Adrenal gland (tissue), 19 donors: ENCODE measurements at regions of chr4 and their contacts with region 1.

Region 1: GRCh38 chr4:53929955-53930798 is 134.2 kb downstream of the CHIC2 start:
- DNase-seq: peak; percentile 75 to 95 (median 86)
- H3K4me3 ChIP-seq: no peak overlapping the region
- H3K27ac ChIP-seq: no peak overlapping the region
- H3K4me1 ChIP-seq: no peaks in the 10 kb centered on the region
- H3K27me3 ChIP-seq: no peaks in the 10 kb centered on the region
- CTCF ChIP-seq: peak; percentile 62 to 95 (median 91)
- POLR2A ChIP-seq: no peak

Region 2: DNA sequence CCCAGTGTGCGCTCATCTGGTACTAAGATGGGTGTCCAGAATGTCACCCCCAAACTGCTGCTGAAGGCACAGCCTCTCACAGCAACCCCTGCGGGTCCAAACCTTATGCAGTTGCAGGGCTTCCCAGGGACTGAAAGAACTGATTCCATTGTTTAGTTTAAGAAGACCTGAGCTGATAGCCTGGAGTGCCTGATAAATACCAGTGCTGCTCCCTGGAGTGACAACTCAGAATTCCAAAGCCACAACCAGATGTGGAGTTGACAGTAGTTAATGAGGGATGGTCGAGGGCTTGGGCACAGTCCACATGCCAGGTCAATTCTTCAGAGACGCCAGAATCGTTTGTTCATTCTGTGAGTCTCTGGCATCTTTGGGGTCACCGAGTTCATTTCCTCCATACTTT is 410.1 kb before region 1 on chr4:
- intact Hi-C with region 1: no loop called
- DNase-seq: no peak
- H3K4me3 ChIP-seq: no peak overlapping the region
- H3K27ac ChIP-seq: no peak overlapping the region
- H3K4me1 ChIP-seq: no peaks in the 10 kb centered on the region
- H3K27me3 ChIP-seq: no peaks in the 10 kb centered on the region
- CTCF ChIP-seq: no peak
- POLR2A ChIP-seq: no peak

Region 3: DNA sequence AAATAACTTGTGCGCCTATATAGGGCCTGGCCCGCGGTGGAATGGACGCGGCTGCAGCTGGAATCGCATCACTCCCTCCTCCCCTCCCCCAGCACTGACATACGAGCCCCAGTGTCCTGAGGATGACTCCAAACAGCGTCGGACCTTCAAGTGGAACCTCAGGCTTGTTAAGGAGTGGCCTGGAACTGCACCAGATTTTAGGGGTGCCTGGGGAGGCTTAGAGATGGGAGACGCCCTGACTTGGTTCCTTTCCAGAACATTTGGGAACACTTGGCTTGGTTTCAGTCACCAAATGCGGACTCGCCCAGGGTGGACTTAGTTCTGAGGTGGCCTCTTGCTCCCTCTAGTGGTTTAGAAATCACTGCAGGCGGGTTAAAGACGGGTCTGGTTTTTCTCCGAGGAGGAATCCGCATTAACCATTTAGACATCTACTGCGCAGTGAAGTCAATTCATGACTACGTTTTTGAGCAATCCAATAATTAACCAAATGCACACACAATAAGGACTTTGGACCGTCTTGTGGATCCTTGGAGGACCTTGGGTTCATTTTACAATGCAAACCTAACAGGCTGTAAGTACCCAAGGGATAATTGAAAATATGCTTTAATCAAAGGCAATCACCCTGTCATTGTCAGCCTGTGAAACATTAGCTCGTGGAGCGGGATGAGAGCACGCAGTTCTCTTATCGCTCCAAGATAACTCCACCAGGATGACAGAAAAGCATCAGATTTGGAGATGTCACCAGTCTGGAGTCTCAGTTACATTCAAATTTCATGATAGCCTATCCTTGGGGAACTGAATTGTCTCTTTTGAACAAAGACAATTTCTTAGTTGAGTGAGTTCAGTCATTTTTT is 287.7 kb after region 1 on chr4:
- intact Hi-C with region 1: loop called (anchors 5 kb)
- DNase-seq: peak; percentile 71 to 88 (median 80)
- H3K4me3 ChIP-seq: peak overlapping the region in 1 of 4 donors; percentile 61
- H3K27ac ChIP-seq: peak overlapping the region in 1 of 5 donors; percentile 65
- H3K4me1 ChIP-seq: no peaks in the 10 kb centered on the region
- H3K27me3 ChIP-seq: no peaks in the 10 kb centered on the region
- CTCF ChIP-seq: peak; percentile 88 to 96 (median 92)
- POLR2A ChIP-seq: no peak

Region 4: GRCh38 chr4:54596201-54596600 is 666.0 kb after region 1 on chr4:
- intact Hi-C with region 1: no loop called
- DNase-seq: no peak
- H3K4me3 ChIP-seq: no peak overlapping the region
- H3K27ac ChIP-seq: no peak overlapping the region
- H3K4me1 ChIP-seq: no peaks in the 10 kb centered on the region
- H3K27me3 ChIP-seq: no peaks in the 10 kb centered on the region
- CTCF ChIP-seq: no peak
- POLR2A ChIP-seq: no peak